ENCODE measurements at regions of chr4 and their contacts with region 1.

Region 1: DNA sequence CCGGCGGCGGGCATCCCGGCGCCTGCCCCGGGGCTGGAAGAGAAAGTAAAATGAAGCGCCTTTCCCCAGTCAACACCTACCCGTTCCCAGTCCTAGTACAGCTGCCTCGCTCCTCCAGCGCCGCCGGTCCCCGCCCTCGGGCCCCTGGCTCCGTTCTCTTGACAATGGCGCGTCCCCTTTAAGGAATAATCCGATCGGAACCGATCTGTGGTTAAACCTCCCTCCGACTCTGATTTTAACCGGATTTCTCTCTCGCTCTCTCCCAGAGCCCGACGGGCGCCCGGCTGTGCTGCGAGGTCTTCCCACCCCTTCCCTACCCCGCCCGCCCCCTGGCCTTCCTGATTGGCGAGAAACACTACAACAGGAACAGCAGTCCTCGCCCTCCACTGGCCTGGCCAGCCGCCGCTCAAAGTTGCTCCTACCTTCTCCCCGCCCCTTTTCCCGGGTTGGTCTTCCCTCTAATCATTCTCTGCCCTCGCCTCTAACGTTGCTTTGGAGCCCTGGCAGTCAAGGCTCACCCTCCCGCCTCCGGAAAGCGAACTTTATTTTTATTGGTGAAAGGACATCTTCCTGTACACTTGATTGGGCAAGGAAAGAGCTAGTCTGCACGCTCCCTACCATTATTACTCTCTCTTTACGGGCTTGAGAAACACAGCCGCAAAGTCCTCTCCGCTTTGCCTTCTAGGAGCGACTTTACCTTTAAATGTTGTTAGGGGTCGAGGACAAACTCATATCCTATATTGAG is at the start of gene FRYL:
- DNase-seq: peak; percentile 99
- ATAC-seq: peak; percentile 88
- H3K4me3 ChIP-seq: peak within 1 kb of the TSS; percentile 97
- H3K27ac ChIP-seq: peak within 1 kb of the TSS; percentile 97
- H3K4me1 ChIP-seq: 0 out of 2 replicates have a peak, but pooled peaks cover 2% of the 10 kb centered on the region
- H3K27me3 ChIP-seq: no peaks in the 10 kb centered on the region
- CTCF ChIP-seq: no peak
- EP300 ChIP-seq: no peak
- POLR2A ChIP-seq: peak; percentile 60
- RAD21 ChIP-seq: no peak
- polyA plus RNA-seq, gene FRYL: 10.3 to 12.6 TPM

Region 2: DNA sequence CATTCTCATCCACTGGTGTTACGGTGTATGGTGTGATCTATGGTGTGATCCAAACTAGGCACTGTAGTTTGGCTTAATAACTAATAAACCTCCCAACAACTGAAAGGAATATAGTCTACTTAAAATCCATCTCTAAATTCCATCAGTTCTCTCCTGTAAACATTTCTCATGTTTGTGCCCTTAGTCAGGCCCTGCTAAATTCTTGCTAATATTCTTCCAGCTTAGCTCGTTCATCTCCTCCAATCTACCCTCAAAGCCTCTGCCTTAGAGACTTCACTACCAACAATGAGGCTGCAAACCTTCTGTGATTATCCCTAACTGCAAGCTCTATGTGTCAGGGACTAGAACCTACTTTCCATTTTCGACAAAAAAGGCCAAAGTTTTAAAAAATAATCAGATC is 262.0 kb before region 1 on chr4:
- CTCF ChIA-PET with region 1: no interaction called
- POLR2A ChIA-PET with region 1: no interaction called
- RAD21 ChIA-PET with region 1: no interaction called
- SMC1A ChIA-PET with region 1: no interaction called
- in situ Hi-C with region 1: no loop called
- intact Hi-C with region 1: no loop called
- DNase-seq: no peak
- ATAC-seq: no peak
- H3K4me3 ChIP-seq: no peak overlapping the region
- H3K27ac ChIP-seq: no peak overlapping the region
- H3K4me1 ChIP-seq: no peaks in the 10 kb centered on the region
- H3K27me3 ChIP-seq: no peaks in the 10 kb centered on the region
- CTCF ChIP-seq: no peak
- EP300 ChIP-seq: no peak
- POLR2A ChIP-seq: no peak
- RAD21 ChIP-seq: no peak

Region 3: GRCh38 chr4:48681856-48682255 is 98.3 kb before region 1 on chr4:
- CTCF ChIA-PET with region 1: interaction called, 4 read pairs
- POLR2A ChIA-PET with region 1: interaction called, 5 read pairs
- RAD21 ChIA-PET with region 1: no interaction called
- SMC1A ChIA-PET with region 1: interaction called, 3 read pairs
- in situ Hi-C with region 1: no loop called
- intact Hi-C with region 1: loop called (anchors 5 kb)
- DNase-seq: peak; percentile 35
- ATAC-seq: peak; percentile 94
- H3K4me3 ChIP-seq: no peak overlapping the region
- H3K27ac ChIP-seq: no peak overlapping the region
- H3K4me1 ChIP-seq: peaks cover 13% of the 10 kb centered on the region
- H3K27me3 ChIP-seq: no peaks in the 10 kb centered on the region
- CTCF ChIP-seq: peak; percentile 30 to 69 (median 38); a peak in 4 of 6 replicates
- EP300 ChIP-seq: no peak
- POLR2A ChIP-seq: no peak
- RAD21 ChIP-seq: peak; percentile 71

Region 4: DNA sequence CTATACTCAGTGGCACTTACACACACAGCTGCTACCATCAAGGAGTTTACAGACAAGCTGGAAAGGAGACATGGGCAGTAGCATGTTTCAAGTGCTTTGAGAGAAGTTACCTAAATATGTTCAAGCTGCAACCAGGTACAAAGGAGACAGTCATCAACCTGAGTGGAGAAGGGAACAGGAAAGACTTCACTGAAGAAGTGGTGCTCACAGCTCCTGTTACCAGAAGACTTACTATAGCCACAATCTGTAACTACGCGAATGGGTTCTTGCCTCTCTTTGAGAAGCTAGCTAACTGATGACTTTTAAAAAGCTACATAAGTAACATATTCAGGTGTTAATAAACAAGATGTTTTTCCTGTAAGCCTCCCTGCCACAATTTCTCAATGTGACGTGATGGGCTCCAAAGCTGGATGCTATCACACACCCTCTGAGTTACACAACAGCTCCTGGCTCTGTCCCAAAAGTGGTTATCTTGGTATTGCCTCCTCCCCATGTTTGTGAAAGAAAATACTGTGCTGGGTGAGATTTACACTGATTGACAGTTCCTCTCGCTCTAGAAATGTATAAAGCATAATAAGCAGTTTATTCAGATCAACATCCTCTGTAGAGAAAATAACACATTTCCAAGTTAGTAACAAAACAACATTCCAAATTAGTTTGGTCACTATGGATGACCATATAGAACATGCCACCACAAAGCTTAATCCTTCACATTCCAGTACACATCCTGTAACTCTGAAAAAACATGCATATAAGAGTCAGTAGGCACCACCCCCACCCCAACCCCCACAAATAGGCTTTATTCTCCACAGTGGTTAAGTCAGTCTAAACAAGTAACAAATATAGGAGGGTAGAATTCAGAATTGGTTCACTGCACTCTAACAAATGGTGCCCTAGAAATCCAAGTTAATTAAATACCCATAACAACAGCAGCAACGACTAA is 81.9 kb before region 1 on chr4:
- CTCF ChIA-PET with region 1: interaction called, 3 read pairs
- POLR2A ChIA-PET with region 1: interaction called, 4 read pairs
- RAD21 ChIA-PET with region 1: interaction called, 12 read pairs
- SMC1A ChIA-PET with region 1: interaction called, 3 read pairs
- in situ Hi-C with region 1: no loop called
- intact Hi-C with region 1: loop called (anchors 5 kb)
- DNase-seq: no peak
- ATAC-seq: no peak
- H3K4me3 ChIP-seq: no peak overlapping the region
- H3K27ac ChIP-seq: no peak overlapping the region
- H3K4me1 ChIP-seq: peaks cover 6% of the 10 kb centered on the region
- H3K27me3 ChIP-seq: no peaks in the 10 kb centered on the region
- CTCF ChIP-seq: no peak
- EP300 ChIP-seq: no peak
- POLR2A ChIP-seq: no peak
- RAD21 ChIP-seq: no peak

Region 5: GRCh38 chr4:48830706-48831531 is 50.7 kb after region 1 on chr4 and contains the start of gene OCIAD1:
- CTCF ChIA-PET with region 1: interaction called, 4 read pairs
- POLR2A ChIA-PET with region 1: interaction called, 3 read pairs
- RAD21 ChIA-PET with region 1: interaction called, 4 read pairs
- SMC1A ChIA-PET with region 1: interaction called, 8 read pairs
- in situ Hi-C with region 1: no loop called
- intact Hi-C with region 1: loop called (anchors 1 kb)
- DNase-seq: peak; percentile 99
- ATAC-seq: peak; percentile 98
- H3K4me3 ChIP-seq: peak within 1 kb of the TSS; percentile 97
- H3K27ac ChIP-seq: peak within 1 kb of the TSS; percentile 98
- H3K4me1 ChIP-seq: no peaks in the 10 kb centered on the region
- H3K27me3 ChIP-seq: no peaks in the 10 kb centered on the region
- CTCF ChIP-seq: no peak
- EP300 ChIP-seq: peak; percentile 14 to 39; a peak in 3 of 4 replicates
- POLR2A ChIP-seq: peak; percentile 96
- RAD21 ChIP-seq: no peak
- polyA plus RNA-seq, gene OCIAD1: 131 to 141 TPM

Region 6: DNA sequence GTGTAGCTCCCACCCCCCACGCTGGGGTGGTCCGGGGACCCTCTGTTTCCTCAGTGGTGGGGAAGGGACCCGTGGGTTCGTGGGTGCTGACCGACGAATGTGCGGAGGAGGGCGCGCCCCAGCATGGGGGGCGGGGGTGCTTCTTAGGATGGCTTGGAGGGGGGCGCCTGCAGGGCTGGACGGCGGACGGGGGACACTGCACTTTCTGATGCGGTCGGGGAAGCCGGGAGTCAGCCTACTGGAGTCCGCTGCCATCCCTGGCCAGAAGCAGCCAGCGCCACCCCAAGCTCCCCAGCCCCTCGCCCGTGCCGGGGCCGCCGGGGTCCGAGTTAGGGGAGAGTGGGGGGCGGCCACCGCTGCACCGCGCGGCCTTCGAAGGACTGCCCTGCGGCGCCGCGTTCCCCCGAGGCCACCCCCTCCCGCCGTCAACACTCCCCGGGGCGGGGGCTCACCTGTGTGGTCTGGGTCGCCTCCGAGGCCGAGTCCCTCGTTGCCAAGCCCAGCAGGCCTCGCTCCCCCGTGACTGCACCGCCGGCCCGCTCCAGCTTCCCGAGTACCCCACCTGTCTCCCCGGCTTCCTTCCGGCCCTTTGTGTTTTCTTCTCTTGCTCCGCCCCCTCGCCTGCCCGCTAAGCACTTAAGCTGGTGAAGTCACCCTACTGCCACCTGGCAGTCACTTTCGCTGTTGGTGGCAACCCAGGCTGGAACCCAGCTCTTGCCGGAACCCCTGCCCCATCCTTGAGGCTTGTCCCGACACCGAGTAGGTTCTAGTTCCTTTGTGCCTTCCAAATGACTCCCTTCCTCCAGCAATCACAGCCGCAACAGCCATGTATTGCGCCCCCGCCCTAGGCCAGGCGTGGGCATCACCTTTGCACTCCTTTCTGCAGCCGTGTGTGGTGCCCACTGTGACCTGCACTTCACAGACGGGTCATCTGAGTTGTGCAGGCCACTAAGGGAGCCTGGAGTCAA is 126.3 kb after region 1 on chr4 and contains the start of gene OCIAD2:
- CTCF ChIA-PET with region 1: interaction called, 4 read pairs
- POLR2A ChIA-PET with region 1: no interaction called
- RAD21 ChIA-PET with region 1: interaction called, 4 read pairs
- SMC1A ChIA-PET with region 1: interaction called, 3 read pairs
- in situ Hi-C with region 1: no loop called
- intact Hi-C with region 1: loop called (anchors 2 kb)
- DNase-seq: peak; percentile 39
- ATAC-seq: peak; percentile 96
- H3K4me3 ChIP-seq: peak within 1 kb of the TSS; percentile 86
- H3K27ac ChIP-seq: peak within 1 kb of the TSS; percentile 43; the same call in 1 of the 2 replicates
- H3K4me1 ChIP-seq: 0 out of 2 replicates have a peak, but pooled peaks cover 4% of the 10 kb centered on the region
- H3K27me3 ChIP-seq: no peaks in the 10 kb centered on the region
- CTCF ChIP-seq: peak; percentile 26 to 55 (median 34); a peak in 4 of 6 replicates
- EP300 ChIP-seq: no peak
- POLR2A ChIP-seq: peak; percentile 92
- RAD21 ChIP-seq: peak; percentile 50
- polyA plus RNA-seq, gene OCIAD2: 60.1 to 65.1 TPM

Region 7: DNA sequence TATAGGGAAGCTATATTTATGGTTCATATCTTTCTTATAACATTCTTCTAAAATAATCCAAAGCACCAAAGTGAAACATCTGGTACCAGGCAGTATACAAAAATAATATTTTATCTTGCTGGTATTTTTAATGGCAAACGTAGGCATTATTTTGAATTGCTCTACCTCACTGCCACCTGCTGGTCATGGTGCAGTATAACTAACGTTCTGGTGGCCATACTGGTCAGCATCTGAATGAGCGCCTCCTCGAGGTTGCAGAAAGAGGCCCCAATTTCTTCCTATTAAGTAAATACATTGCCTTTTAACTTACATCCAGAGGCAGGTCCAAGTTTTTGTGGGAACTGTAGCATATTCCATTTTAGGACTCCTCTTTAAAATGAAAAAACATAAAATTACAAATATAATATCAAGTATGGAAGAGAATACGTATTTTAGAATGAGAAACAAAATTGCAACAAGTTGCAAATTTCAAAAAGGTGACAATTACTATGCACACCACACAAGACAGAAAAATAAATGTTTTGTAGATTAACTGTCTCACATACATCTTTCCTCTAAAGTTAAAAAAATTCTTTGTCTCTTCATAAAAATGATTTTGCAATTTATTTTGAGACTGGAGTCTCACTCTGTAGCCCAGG is 183.0 kb after region 1 on chr4:
- CTCF ChIA-PET with region 1: interaction called, 3 read pairs
- POLR2A ChIA-PET with region 1: no interaction called
- RAD21 ChIA-PET with region 1: no interaction called
- SMC1A ChIA-PET with region 1: no interaction called
- in situ Hi-C with region 1: no loop called
- intact Hi-C with region 1: loop called (anchors 2 kb)
- DNase-seq: peak; percentile 21
- ATAC-seq: peak; percentile 97
- H3K4me3 ChIP-seq: no peak overlapping the region
- H3K27ac ChIP-seq: no peak overlapping the region
- H3K4me1 ChIP-seq: no peaks in the 10 kb centered on the region
- H3K27me3 ChIP-seq: no peaks in the 10 kb centered on the region; a peak in 1 of 4 replicates
- CTCF ChIP-seq: peak; percentile 89 to 100 (median 99); a peak in 5 of 6 replicates
- EP300 ChIP-seq: no peak
- POLR2A ChIP-seq: no peak
- RAD21 ChIP-seq: peak; percentile 97

Region 8: DNA sequence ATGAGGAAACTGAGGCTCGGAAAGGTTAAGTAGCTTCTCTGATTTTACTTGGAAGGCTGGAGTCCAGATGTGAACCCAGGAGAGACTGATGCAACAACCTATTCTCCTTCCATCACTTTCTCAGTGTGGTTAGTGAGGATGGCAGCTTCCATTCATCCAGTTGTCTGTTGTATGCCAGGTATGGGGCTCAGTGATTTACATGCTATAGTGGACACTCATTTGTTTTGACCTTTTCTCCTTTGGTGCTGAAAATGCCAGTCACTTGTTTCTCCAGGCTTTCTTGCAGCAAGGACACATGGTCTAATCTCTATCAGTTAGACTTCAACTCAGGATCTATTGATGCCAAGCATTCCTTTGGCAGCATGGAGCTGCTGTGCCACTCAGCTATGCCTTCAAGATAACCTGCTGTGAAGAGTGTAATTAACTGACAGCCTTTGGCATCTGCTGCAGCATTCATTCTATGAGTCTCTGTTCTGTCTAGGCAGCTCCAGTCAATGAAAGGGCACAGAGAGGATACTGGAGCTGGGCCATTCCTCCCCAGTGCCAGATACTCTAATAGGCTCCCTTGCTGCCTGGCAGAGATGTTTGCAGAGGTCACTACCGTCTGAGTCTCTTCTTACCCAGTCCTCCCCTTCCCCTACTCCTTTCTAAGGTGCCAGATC is 194.9 kb after region 1 on chr4:
- CTCF ChIA-PET with region 1: no interaction called
- POLR2A ChIA-PET with region 1: no interaction called
- RAD21 ChIA-PET with region 1: no interaction called
- SMC1A ChIA-PET with region 1: no interaction called
- in situ Hi-C with region 1: no loop called
- intact Hi-C with region 1: no loop called
- DNase-seq: no peak
- ATAC-seq: no peak
- H3K4me3 ChIP-seq: no peak overlapping the region
- H3K27ac ChIP-seq: no peak overlapping the region
- H3K4me1 ChIP-seq: no peaks in the 10 kb centered on the region
- H3K27me3 ChIP-seq: 0 out of 4 replicates have a peak, but pooled peaks cover 0 to 2% of the 10 kb centered on the region in 2 experiments
- CTCF ChIP-seq: no peak
- EP300 ChIP-seq: no peak
- POLR2A ChIP-seq: no peak
- RAD21 ChIP-seq: no peak

Region 9: DNA sequence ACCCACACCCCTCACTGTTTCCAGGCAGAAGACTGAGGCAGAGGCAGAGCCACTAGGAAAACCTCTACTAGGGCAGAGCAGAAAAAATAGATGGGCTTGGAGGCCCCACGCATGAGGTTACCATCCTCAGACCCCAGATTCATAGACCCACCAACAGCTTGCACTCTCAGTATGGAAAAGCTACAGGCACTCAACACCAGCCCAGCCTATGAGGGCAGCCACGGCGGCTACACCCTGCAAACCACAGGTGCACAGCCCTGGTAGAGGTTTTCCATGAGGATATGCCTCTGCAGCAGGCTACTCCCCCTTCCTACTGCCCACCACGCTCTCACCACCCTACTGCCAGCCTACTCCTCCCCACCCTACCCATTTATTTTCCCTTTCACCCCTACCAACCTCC is 441.0 kb after region 1 on chr4:
- CTCF ChIA-PET with region 1: no interaction called
- POLR2A ChIA-PET with region 1: no interaction called
- RAD21 ChIA-PET with region 1: no interaction called
- SMC1A ChIA-PET with region 1: no interaction called
- in situ Hi-C with region 1: no loop called
- intact Hi-C with region 1: no loop called
- DNase-seq: no peak
- ATAC-seq: no peak
- H3K4me3 ChIP-seq: no peak overlapping the region
- H3K27ac ChIP-seq: no peak overlapping the region
- H3K4me1 ChIP-seq: no peaks in the 10 kb centered on the region
- H3K27me3 ChIP-seq: no peaks in the 10 kb centered on the region
- CTCF ChIP-seq: no peak
- EP300 ChIP-seq: no peak
- POLR2A ChIP-seq: no peak
- RAD21 ChIP-seq: no peak